Heart right ventricle (tissue), 16 donors: ENCODE measurements at regions of chr13 and their contacts with region 1.

Region 1: DNA sequence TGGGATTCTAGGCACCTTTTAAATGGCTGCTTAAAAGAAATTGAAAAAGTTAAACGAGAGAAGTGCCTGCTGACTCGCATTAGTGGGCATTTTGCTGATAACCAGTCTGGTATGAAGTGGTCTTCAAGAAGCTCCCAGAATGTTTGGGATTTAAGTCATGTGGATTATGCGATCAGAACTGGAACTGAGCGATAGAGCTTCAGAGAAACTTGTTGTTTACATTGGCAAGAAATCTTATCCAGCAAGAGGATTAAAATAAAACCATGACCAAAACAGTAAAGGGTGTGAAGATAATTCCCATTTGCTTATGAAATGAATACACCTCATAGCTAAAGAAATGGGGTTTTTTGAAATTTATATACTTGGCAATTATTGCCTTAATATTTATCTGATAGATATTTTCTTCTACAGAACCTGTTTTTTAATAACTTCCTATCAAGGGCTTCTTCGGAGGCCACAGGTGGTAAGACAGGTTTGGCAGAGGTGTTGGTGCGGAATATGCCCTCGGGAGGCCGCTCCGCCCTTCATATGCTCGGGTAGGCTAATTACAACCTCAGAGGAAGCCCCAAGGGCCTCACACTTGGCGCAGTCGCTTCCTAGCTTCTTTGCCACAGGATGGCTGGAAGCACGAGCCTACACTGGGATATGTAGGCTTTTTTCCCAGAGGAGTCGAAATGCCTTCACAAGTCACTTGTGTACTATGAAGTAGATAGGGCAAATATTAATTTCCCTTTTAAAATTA is 68.6 kb downstream of the LMO7 start:
- DNase-seq: no peak
- ATAC-seq: no peak
- H3K4me3 ChIP-seq: no peak overlapping the region
- H3K27ac ChIP-seq: peak overlapping the region in 1 of 10 donors; percentile 33
- H3K4me1 ChIP-seq: peaks cover 0 to 16% (median 7%) of the 10 kb centered on the region in 9 donors
- H3K27me3 ChIP-seq: no peaks in the 10 kb centered on the region
- CTCF ChIP-seq: no peak

Region 2: GRCh38 chr13:74450964-74451363 is 1253.8 kb before region 1 on chr13:
- intact Hi-C with region 1: loop called in 1 of 10 experiments (anchors 5 kb)
- DNase-seq: no peak
- ATAC-seq: no peak
- H3K4me3 ChIP-seq: no peak overlapping the region
- H3K27ac ChIP-seq: no peak overlapping the region
- H3K4me1 ChIP-seq: peaks cover 0 to 10% (median 3%) of the 10 kb centered on the region in 9 donors
- H3K27me3 ChIP-seq: no peaks in the 10 kb centered on the region
- CTCF ChIP-seq: no peak

Region 3: DNA sequence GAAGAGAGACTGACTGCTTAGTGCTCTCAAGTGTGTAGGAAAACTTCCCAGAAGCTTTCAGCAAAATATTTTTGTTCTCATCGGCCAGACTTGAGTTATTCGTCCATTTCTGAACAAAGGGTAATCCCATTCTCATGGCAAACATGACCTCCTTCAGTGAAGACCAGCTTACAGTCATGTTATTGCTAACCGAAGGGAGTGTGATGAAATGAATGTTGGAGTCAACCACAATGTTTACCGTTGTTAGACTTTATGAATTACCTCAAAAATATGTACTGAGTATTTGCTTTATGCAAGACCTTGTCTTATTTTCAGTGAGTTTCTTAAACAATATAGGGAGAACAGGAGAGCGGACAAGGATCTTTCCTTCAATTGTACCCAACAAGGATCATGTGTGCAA is 160.0 kb after region 1 on chr13:
- intact Hi-C with region 1: loop called in 5 of 10 experiments (anchors 5 to 10 kb)
- DNase-seq: no peak
- ATAC-seq: no peak
- H3K4me3 ChIP-seq: no peak overlapping the region
- H3K27ac ChIP-seq: no peak overlapping the region
- H3K4me1 ChIP-seq: no peaks in the 10 kb centered on the region
- H3K27me3 ChIP-seq: peaks cover 0 to 4% (median 0%) of the 10 kb centered on the region in 7 donors
- CTCF ChIP-seq: no peak

Region 4: DNA sequence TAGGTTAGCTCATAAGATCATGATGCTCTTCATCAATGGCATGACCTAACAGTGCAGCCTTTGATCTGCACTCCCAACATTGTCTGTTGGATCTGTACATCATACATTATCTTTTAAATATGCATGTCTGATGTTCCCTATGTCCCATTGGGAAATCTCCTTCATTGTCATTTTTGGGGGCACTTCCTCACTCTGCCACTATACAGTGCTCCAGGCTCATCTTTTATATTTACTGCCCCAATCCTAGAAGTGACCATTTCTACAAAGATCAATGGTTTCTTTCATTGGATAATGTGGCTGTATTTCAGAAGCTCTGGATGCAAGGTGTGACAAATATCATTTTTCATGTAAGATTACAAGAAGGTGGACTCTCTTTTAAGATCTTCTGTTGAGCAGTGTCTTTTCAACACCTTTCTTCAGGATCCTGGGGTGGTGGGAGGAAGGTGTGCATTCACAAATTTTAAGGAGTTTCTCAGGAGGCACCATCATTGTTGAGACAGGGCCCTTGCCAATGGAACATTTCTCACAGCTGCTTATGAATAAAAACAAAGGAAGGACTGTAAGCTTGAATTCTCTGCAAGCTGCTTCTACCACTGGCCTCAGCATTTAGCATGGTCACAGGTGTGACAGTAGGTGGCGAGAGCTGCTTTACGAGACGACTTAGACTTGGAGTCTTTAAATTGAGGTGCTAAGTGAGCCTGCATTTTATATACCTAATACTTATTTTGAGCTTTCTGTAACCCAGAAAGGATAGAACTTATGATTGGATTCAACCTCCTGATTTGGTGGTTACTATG is 334.4 kb after region 1 on chr13:
- intact Hi-C with region 1: no loop called
- DNase-seq: no peak
- ATAC-seq: no peak
- H3K4me3 ChIP-seq: no peak overlapping the region
- H3K27ac ChIP-seq: no peak overlapping the region
- H3K4me1 ChIP-seq: peaks cover 0 to 3% (median 0%) of the 10 kb centered on the region in 9 donors
- H3K27me3 ChIP-seq: no peaks in the 10 kb centered on the region
- CTCF ChIP-seq: peak in 1 of 9 donors; percentile 13